ENCODE measurements at regions of chr3 and their contacts with region 1.

Region 1: DNA sequence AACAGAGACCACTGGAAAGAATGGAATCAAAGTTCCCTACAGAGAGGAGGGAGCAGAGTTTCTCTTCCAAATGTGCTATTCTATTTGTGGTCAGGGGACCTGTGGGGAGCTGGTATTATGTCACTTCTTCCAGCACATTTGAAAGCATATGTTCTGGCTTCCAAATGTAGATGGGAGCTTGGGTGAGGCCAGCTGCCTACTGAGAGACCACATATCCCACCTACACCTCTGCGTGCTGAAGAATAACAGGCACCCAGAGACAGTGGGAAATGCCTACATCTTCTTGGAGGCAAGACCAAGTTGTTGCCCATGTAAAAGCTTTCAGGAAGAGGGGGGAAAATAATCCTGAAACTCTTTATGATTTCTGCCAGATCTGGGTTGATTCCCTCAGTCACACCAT is 286.8 kb upstream of the UMPS start:
- DNase-seq: peak in 2 of 10 donors; percentile 52 to 56
- H3K4me3 ChIP-seq: no peak overlapping the region
- H3K27ac ChIP-seq: peak overlapping the region in 40 of 59 donors; percentile 10 to 85 (median 65)
- H3K27me3 ChIP-seq: no peaks in the 10 kb centered on the region
- CTCF ChIP-seq: no peak

Region 2: DNA sequence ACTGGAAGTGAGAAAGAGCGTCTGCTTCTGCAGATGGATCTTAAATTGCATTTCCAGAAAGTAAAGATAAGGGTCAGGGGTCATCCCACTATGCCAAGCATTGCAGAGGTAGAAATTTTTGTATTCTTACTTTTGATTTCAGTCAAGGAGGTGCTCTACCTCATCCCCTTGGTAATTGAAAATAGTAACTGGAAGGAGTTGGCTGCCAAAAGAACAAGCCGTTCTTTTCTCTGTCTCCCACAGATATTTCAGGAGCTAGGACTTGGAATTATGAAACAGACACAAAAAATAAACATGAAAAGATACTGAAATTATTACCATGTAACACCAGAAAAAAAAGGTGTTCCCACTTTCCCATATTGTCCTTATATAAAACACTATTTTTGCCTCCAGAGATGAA is 23.1 kb before region 1 on chr3:
- intact Hi-C with region 1: loop called in 1 of 2 experiments (anchors 1 kb)
- DNase-seq: no peak
- H3K4me3 ChIP-seq: no peak overlapping the region
- H3K27ac ChIP-seq: peak overlapping the region in 49 of 59 donors; percentile 18 to 85 (median 72)
- H3K27me3 ChIP-seq: no peaks in the 10 kb centered on the region
- CTCF ChIP-seq: no peak

Region 3: DNA sequence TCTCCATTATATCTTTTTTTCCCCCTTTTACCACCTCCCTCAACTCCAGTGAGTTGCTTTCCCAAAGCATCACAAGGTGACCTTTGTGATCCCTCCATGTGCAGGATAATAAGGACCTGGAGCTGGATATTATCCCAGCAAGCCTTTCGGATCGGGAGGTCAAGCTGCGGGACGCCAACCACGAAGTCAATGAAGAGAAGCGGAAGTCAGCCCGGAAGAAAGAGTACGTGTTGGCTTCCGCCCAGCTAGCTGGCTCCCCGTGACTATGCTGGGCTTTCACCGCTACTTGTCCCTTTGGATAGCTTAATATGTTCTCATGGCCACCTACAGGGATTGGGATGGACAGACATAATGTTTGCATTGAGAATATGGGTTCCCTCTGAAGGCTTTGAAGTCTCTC is 13.1 kb after region 1 on chr3:
- intact Hi-C with region 1: no loop called
- DNase-seq: no peak
- H3K4me3 ChIP-seq: no peak overlapping the region
- H3K27ac ChIP-seq: peak overlapping the region in 8 of 59 donors; percentile 0 to 37 (median 16)
- H3K27me3 ChIP-seq: no peaks in the 10 kb centered on the region
- CTCF ChIP-seq: no peak

Measured in dorsolateral prefrontal cortex (tissue), 120 donors.